Right cardiac atrium (tissue), 5 donors: ENCODE measurements at regions of chr17 and their contacts with region 1.

Region 1: DNA sequence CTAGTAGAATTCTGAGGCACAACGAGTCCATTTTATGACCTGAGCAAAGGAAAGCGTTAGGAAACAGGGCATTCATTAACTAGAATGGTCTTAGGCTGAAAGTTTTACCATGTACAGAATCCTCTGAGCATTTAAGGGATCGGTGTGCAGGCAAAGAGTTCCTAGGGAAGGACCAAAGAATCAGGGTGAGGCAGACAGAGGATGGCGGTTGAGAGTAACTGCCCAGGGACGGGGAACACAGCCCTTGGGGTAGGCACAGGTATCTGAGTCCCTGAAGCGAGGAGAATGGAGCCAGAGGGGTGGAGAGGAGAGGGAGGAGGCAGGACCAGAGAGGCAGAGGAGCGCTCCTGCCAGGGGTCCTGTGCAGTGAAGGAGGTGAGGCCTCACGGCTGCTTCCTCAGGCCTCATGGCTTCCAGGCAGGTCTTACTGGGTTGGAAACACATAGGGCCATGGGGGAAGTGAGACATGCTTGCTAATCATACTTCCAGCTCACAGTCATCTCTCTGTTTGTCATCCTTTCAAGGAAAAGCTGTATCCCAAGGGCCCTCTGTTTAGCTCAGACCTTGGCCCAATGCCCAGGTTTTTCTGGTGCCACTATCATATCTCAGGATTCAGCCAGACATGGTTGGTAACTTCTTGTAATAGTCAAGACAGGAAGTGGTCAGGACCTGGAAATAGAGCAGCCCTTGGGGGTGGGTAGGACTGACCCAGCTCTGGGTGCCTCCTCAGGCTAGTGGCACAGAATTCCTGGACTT is 13.8 kb upstream of the ITGB3 start:
- DNase-seq: peak; percentile 80 to 88 (median 87)
- ATAC-seq: peak; percentile 90 to 94
- H3K4me3 ChIP-seq: no peak overlapping the region
- H3K27ac ChIP-seq: peak overlapping the region; percentile 94
- H3K4me1 ChIP-seq: peaks cover 10% of the 10 kb centered on the region
- H3K27me3 ChIP-seq: no peaks in the 10 kb centered on the region

Region 2: GRCh38 chr17:47304031-47304585 is 64.3 kb after region 1 on chr17:
- intact Hi-C with region 1: loop called in 1 of 4 experiments (anchors 5 kb)
- DNase-seq: no peak
- ATAC-seq: no peak
- H3K4me3 ChIP-seq: no peak overlapping the region
- H3K27ac ChIP-seq: no peak overlapping the region
- H3K4me1 ChIP-seq: no peaks in the 10 kb centered on the region
- H3K27me3 ChIP-seq: no peaks in the 10 kb centered on the region

Region 3: GRCh38 chr17:47310186-47310970 is 70.6 kb after region 1 on chr17:
- intact Hi-C with region 1: loop called in 3 of 4 experiments (anchors 5 kb)
- DNase-seq: no peak
- ATAC-seq: no peak
- H3K4me3 ChIP-seq: no peak overlapping the region
- H3K27ac ChIP-seq: no peak overlapping the region
- H3K4me1 ChIP-seq: peaks cover 1% of the 10 kb centered on the region
- H3K27me3 ChIP-seq: no peaks in the 10 kb centered on the region